AG04450 (cell line): ENCODE measurements at regions of chr1 and their contacts with region 1.

Region 1: DNA sequence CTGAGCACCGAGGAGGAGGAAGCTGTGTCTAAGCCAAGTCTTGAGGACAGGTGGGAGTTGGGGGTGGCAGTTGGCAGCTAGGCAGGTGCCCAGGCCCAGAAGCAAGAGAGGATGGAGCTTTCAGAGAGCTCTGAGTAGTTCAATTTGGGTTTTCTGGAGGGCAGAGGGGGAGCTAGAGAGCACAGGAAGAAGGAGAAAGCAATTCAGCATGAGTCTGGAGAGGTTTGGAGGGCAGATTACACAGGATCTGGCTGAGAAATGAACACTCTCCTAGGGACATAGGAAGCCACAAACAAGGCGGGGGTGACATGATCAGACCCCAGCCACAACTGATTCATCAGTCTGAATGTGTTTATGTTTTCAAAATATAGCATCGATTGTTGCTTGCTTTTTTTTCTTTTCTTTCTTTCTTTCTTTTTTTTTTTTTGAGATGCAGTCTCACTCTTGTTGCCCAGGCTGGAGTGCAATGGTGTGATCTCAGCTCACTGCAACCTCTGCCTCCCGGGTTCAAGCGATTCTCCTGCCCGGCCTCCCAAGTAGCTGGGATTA is 23.8 kb downstream of the PTPRF start:
- DNase-seq: no peak
- H3K4me3 ChIP-seq: no peak overlapping the region
- H3K27ac ChIP-seq: no peak overlapping the region
- H3K27me3 ChIP-seq: no peaks in the 10 kb centered on the region
- CTCF ChIP-seq: peak; percentile 82

Region 2: GRCh38 chr1:43569175-43569574 is 14.7 kb after region 1 on chr1:
- CTCF ChIA-PET with region 1: interaction called, 11 read pairs
- POLR2A ChIA-PET with region 1: no interaction called
- DNase-seq: no peak
- H3K4me3 ChIP-seq: no peak overlapping the region
- H3K27ac ChIP-seq: no peak overlapping the region
- H3K27me3 ChIP-seq: no peaks in the 10 kb centered on the region
- CTCF ChIP-seq: no peak

Region 3: DNA sequence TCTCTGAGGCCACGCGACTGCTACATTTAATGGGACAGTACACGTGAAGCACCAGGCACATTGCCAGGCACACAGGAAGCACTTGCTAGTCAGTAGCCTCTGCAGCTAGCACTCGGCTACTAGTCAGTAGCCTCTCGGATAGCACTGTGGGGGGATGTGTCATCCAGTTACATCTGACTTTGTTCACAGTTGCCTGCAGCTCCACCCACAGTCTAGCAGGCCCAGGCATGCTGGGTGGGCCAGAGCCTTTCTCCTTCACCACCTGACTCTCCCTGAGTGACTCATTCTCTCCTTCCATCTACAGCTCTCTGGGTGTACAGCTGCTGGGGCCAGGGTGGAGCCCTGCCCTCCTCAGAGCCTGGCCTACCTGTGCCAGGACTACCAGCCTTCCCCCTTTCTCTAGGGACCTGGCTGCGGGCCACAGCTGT is 27.7 kb after region 1 on chr1:
- CTCF ChIA-PET with region 1: no interaction called
- POLR2A ChIA-PET with region 1: no interaction called
- DNase-seq: peak; percentile 81
- H3K4me3 ChIP-seq: no peak overlapping the region
- H3K27ac ChIP-seq: peak overlapping the region; percentile 52
- H3K27me3 ChIP-seq: no peaks in the 10 kb centered on the region
- CTCF ChIP-seq: no peak

Region 4: GRCh38 chr1:43644558-43644957 is 90.0 kb after region 1 on chr1:
- CTCF ChIA-PET with region 1: interaction called, 11 read pairs
- POLR2A ChIA-PET with region 1: interaction called, 8 read pairs
- DNase-seq: no peak
- H3K4me3 ChIP-seq: no peak overlapping the region
- H3K27ac ChIP-seq: no peak overlapping the region
- H3K27me3 ChIP-seq: no peaks in the 10 kb centered on the region
- CTCF ChIP-seq: no peak